ENCODE measurements at regions of chr11 and their contacts with region 1.

Region 1: DNA sequence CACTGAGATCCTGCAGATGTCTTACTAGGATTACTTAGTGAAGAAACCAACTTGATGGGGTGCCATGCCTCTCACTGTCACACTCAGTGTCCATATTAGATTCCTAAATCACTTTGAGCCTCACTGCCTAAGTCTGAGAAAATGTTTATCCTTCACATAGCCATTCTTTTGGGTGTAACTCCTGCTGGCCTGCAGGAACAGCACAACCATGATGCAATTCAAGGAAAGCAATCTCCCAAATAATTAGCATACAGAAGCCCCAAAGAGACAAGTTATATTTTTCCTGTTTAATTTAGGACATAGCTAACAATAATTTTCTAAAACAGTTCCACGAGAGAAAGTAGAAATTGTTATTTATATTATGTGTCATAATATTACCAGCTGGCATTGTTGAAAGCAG is 655.5 kb downstream of the KCNA4 start:
- DNase-seq: no peak
- H3K4me3 Mint-ChIP-seq: no peak overlapping the region
- H3K27ac Mint-ChIP-seq: no peak overlapping the region
- H3K4me1 Mint-ChIP-seq: peaks cover 6% of the 10 kb centered on the region
- H3K27me3 Mint-ChIP-seq: no peaks in the 10 kb centered on the region
- CTCF ChIP-seq: no peak

Region 2: GRCh38 chr11:28820296-28820989 is 540.9 kb before region 1 on chr11:
- CTCF ChIA-PET with region 1: no interaction called
- POLR2A ChIA-PET with region 1: no interaction called
- intact Hi-C with region 1: no loop called
- DNase-seq: peak; percentile 80
- H3K4me3 Mint-ChIP-seq: no peak overlapping the region
- H3K27ac Mint-ChIP-seq: peak overlapping the region; percentile 46
- H3K4me1 Mint-ChIP-seq: peaks cover 34% of the 10 kb centered on the region
- H3K27me3 Mint-ChIP-seq: no peaks in the 10 kb centered on the region
- CTCF ChIP-seq: no peak

Region 3: GRCh38 chr11:29343465-29344333 is 17.7 kb before region 1 on chr11:
- CTCF ChIA-PET with region 1: interaction called, 17 read pairs
- POLR2A ChIA-PET with region 1: interaction called, 3 read pairs
- intact Hi-C with region 1: no loop called
- DNase-seq: peak; percentile 63
- H3K4me3 Mint-ChIP-seq: no peak overlapping the region
- H3K27ac Mint-ChIP-seq: no peak overlapping the region
- H3K4me1 Mint-ChIP-seq: no peaks in the 10 kb centered on the region
- H3K27me3 Mint-ChIP-seq: no peaks in the 10 kb centered on the region
- CTCF ChIP-seq: peak; percentile 89

Region 4: GRCh38 chr11:29395555-29396072 is 34.2 kb after region 1 on chr11:
- CTCF ChIA-PET with region 1: no interaction called
- POLR2A ChIA-PET with region 1: no interaction called
- intact Hi-C with region 1: no loop called
- DNase-seq: no peak
- H3K4me3 Mint-ChIP-seq: no peak overlapping the region
- H3K27ac Mint-ChIP-seq: no peak overlapping the region
- H3K4me1 Mint-ChIP-seq: no peaks in the 10 kb centered on the region
- H3K27me3 Mint-ChIP-seq: no peaks in the 10 kb centered on the region
- CTCF ChIP-seq: no peak

Measured in MCF 10A (cell line).